Activated CD8-positive, alpha-beta T cell treated with anti-CD3 and anti-CD28 coated beads for 36 hours (primary cell): ENCODE measurements at regions of chr20 and their contacts with region 1.

Region 1: DNA sequence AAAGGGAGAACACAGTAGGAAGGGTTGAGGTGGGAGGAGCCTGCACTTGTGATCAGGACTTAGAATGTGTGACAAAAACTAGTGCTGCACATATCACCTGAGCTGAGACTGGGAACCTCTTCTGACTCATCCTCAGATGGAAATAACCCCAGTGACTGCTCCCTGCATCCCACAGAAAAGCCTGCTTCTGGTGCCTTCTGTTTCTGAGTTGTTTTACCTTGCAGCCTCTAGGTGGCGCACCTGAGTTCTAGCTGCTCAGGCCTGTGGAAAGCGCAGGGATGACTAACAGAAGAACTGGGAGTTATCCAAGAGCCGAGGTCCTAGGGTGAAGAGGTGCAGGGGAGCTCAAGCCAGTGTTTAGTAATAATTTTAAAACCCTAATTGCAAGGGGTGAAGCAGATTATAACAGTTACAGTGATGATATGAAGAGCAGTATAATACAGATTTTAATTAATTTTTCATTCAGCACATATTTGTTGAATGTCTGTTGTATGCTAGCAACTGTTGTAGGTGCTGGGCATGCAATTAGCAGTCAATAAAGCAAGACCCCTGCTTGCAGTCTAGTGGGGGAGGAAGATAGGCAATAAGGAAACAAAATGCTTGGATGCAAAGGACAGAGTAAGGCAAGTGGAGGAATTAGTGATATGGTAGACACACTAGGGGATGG is 302.5 kb downstream of the DHX35 start:
- DNase-seq: peak; percentile 58
- ATAC-seq: peak; percentile 56
- H3K4me3 Mint-ChIP-seq: no peak overlapping the region
- H3K27ac Mint-ChIP-seq: no peak overlapping the region
- H3K4me1 Mint-ChIP-seq: no peaks in the 10 kb centered on the region
- H3K27me3 Mint-ChIP-seq: no peaks in the 10 kb centered on the region
- CTCF ChIP-seq: peak; percentile 89

Region 2: GRCh38 chr20:39206899-39207564 is 57.6 kb before region 1 on chr20:
- CTCF ChIA-PET with region 1: no interaction called
- POLR2A ChIA-PET with region 1: no interaction called
- intact Hi-C with region 1: no loop called
- DNase-seq: no peak
- ATAC-seq: no peak
- H3K4me3 Mint-ChIP-seq: no peak overlapping the region
- H3K27ac Mint-ChIP-seq: no peak overlapping the region
- H3K4me1 Mint-ChIP-seq: no peaks in the 10 kb centered on the region
- H3K27me3 Mint-ChIP-seq: peaks cover 2% of the 10 kb centered on the region
- CTCF ChIP-seq: no peak

Region 3: GRCh38 chr20:39245685-39246311 is 18.8 kb before region 1 on chr20:
- CTCF ChIA-PET with region 1: interaction called, 12 read pairs
- POLR2A ChIA-PET with region 1: no interaction called
- intact Hi-C with region 1: no loop called
- DNase-seq: no peak
- ATAC-seq: no peak
- H3K4me3 Mint-ChIP-seq: no peak overlapping the region
- H3K27ac Mint-ChIP-seq: no peak overlapping the region
- H3K4me1 Mint-ChIP-seq: peaks cover 14% of the 10 kb centered on the region
- H3K27me3 Mint-ChIP-seq: no peaks in the 10 kb centered on the region
- CTCF ChIP-seq: no peak